Activated CD8-positive, alpha-beta T cell treated with anti-CD3 and anti-CD28 coated beads for 36 hours (primary cell): ENCODE measurements at regions of chr11 and their contacts with region 1.

Region 1: GRCh38 chr11:1309498-1310317 is at the start of gene TOLLIP:
- DNase-seq: peak; percentile 95
- ATAC-seq: peak; percentile 89
- H3K4me3 Mint-ChIP-seq: peak within 1 kb of the TSS; percentile 93
- H3K27ac Mint-ChIP-seq: peak within 1 kb of the TSS; percentile 96
- H3K4me1 Mint-ChIP-seq: peaks cover 37% of the 10 kb centered on the region
- H3K27me3 Mint-ChIP-seq: no peaks in the 10 kb centered on the region
- CTCF ChIP-seq: no peak
- total RNA-seq, gene TOLLIP: 32.4 to 33.1 TPM

Region 2: DNA sequence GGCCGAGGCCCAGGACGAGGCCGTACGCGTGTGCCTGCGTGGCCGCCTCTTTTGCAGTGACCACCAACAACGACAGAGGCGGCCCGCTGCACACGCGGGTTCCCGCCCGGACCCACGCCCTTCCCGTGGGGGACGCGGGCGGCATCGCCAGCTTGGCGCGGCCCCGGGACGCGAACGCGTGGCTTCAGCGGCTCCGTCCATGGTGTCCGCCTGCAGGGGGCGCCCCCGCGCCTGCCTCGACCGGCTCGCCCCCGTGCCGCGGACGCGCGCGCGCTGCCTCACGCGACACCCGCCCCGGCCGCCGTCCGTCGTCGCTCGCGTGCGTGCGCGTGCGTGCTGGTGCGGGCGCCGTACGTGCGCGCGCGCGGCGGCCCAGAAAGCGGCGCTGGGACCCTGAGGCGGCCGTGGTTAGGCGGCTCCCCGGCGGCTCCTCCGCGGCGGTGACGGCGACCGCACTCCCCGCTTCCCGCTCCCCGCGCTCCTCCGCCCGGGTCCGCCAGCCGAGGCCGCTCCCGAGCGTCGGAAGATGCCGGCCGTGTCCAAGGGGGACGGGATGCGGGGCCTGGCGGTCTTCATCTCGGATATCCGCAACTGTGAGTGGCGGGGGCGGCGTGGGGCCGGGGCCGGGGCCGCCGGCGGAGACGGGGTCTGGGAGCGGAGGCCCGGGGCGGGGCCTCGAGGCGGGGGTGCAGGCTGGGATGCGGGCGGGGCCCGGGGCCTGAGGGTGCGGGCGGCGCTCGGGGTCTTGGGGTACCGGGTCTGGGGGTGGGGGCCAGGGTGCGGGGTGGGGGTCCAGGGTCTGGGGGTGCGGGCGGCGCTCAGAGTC is 384.0 kb before region 1 on chr11 and contains the start of gene AP2A2:
- CTCF ChIA-PET with region 1: no interaction called
- POLR2A ChIA-PET with region 1: no interaction called
- intact Hi-C with region 1: no loop called
- DNase-seq: peak; percentile 90
- ATAC-seq: peak; percentile 80
- H3K4me3 Mint-ChIP-seq: peak within 1 kb of the TSS; percentile 78
- H3K27ac Mint-ChIP-seq: peak within 1 kb of the TSS; percentile 83
- H3K4me1 Mint-ChIP-seq: peaks cover 26% of the 10 kb centered on the region
- H3K27me3 Mint-ChIP-seq: no peaks in the 10 kb centered on the region
- CTCF ChIP-seq: peak; percentile 79
- total RNA-seq, gene AP2A2: 34.0 to 34.6 TPM

Region 3: DNA sequence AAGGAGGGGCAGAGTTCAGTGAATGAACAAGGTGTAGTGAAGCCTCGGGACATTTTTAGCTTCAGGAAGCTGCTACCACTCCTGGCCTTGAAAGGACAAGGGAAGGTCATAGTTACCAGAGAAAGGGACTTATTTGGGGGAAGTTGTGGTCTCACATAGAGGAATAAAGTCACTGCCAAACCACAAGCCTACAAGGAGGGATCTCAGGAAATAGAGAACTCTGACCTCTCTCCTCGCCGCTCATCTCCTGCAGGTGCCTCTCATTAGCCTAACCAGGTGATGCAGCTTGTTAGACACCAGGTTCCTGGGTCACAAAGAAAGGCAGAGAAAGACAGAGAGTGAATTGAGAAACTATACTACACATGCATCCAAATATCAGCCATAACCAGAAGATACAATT is 14.1 kb after region 1 on chr11:
- CTCF ChIA-PET with region 1: interaction called, 4 read pairs
- POLR2A ChIA-PET with region 1: interaction called, 11 read pairs
- intact Hi-C with region 1: no loop called
- DNase-seq: no peak
- ATAC-seq: no peak
- H3K4me3 Mint-ChIP-seq: no peak overlapping the region
- H3K27ac Mint-ChIP-seq: no peak overlapping the region
- H3K4me1 Mint-ChIP-seq: peaks cover 10% of the 10 kb centered on the region
- H3K27me3 Mint-ChIP-seq: peaks cover 15% of the 10 kb centered on the region
- CTCF ChIP-seq: no peak

Region 4: DNA sequence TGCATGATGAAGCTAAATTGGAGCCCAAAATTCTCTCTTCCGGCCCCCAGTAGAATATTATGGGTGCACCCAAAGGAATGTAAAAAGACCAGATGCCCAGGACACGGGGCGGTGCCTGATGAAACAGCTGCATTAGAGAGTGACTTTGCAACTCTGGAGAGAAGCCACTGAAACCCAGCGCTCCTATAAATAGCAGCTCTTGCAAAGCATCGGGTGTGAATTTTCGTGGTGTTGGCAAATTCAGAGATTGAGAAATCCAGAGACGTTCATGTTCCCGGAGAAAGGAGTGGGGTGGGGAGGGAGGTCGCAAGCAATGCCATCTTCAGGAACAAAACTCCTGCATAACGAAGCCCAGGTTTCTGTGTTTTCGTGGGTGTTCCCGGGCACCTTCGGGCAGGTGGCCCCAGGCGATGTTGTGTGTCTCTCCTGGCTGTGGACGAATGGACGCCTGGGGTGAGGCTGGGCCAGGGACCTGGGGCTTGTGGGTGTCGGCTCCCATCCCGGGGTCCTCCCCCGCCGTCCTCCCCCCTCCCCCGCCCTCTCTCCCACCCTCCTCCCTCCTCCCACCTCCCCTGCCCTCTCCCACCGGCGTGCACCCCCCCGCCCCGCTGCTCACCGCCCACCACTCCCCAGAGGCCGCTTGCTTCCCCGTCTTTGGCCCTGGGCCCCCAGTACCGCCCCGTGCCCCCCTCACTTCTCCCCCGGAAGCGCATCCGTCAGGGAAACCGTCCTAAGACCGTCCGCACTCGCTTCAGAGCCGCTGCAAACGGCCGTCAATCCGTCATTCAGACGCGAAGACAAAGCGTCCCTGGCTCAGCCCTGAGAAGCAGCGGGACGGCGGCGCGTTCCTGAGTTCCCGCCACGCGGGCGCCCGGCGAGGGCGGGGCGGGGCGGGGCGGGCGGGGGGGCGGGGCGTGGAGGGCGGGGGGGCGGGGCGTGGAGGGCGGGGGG is 26.4 kb after region 1 on chr11:
- CTCF ChIA-PET with region 1: interaction called, 3 read pairs
- POLR2A ChIA-PET with region 1: interaction called, 11 read pairs
- intact Hi-C with region 1: no loop called
- DNase-seq: peak; percentile 73
- ATAC-seq: peak; percentile 79
- H3K4me3 Mint-ChIP-seq: peak overlapping the region; percentile 68
- H3K27ac Mint-ChIP-seq: peak overlapping the region; percentile 78
- H3K4me1 Mint-ChIP-seq: peaks cover 13% of the 10 kb centered on the region
- H3K27me3 Mint-ChIP-seq: peaks cover 4% of the 10 kb centered on the region
- CTCF ChIP-seq: no peak

Region 5: GRCh38 chr11:1422481-1422880 is 112.8 kb after region 1 on chr11:
- CTCF ChIA-PET with region 1: no interaction called
- POLR2A ChIA-PET with region 1: no interaction called
- intact Hi-C with region 1: no loop called
- DNase-seq: no peak
- ATAC-seq: no peak
- H3K4me3 Mint-ChIP-seq: no peak overlapping the region
- H3K27ac Mint-ChIP-seq: no peak overlapping the region
- H3K4me1 Mint-ChIP-seq: no peaks in the 10 kb centered on the region
- H3K27me3 Mint-ChIP-seq: no peaks in the 10 kb centered on the region
- CTCF ChIP-seq: no peak